CD4-positive, alpha-beta memory T cell (primary cell): ENCODE measurements at regions of chrX and their contacts with region 1.

Region 1: DNA sequence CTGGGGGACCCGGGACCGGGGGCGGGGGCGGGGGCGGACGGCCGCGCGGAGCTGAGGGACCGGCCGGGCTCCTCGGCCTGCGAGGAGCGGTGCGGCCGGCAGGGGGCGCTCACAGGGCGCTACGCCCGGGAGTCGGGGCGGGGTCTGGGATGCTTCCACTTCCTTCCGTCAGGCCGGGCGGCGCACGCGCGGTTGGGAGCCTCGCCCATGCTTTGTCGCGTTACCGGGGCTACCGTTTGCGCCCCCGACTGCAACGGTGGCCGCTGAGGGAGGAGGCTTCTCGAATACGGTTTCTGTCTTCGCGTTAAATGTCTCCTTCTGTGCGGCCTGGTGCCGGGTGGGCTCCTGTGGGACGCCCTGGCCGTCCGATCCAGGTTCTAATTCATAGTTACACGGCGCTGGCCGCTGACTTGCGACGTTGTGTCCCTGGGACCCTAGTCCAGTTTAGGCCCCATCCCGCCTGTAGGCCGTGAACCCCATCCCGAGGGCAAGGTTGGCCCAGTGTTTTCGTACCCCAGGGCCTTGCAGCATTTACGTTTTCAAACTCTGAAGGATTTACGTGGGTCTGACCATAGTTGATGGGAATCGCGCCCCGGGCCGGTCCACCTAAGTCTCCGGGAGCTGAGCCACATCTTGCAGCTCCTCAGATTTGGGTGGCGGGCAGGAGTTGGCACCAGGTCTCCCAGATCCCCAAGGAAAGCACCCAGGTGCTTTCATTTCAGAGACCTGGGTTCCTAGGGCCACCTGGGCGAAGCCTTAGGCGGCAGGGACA is 549 bp downstream of the MSL3 start:
- DNase-seq: peak; percentile 87 to 90 (median 89)
- H3K4me3 ChIP-seq: peak overlapping the region; percentile 56 to 58
- H3K4me3 Mint-ChIP-seq: peak overlapping the region; percentile 88 to 98 (median 94)
- H3K27ac ChIP-seq: peak overlapping the region; percentile 76
- H3K27ac Mint-ChIP-seq: peak overlapping the region; percentile 91 to 99 (median 95)
- H3K4me1 ChIP-seq: peaks cover 29% of the 10 kb centered on the region
- H3K4me1 Mint-ChIP-seq: peaks cover 14 to 46% (median 29%) of the 10 kb centered on the region in 4 donors
- H3K27me3 ChIP-seq: no peaks in the 10 kb centered on the region
- H3K27me3 Mint-ChIP-seq: no peaks in the 10 kb centered on the region

Region 2: GRCh38 chrX:10014462-10015356 is 1743.9 kb before region 1 on chrX:
- CTCF ChIA-PET with region 1: no interaction called
- POLR2A ChIA-PET with region 1: no interaction called
- intact Hi-C with region 1: loop called (anchors 10 kb)
- DNase-seq: peak; percentile 72 to 84 (median 80)
- H3K4me3 ChIP-seq: peak overlapping the region in 1 of 2 donors; percentile 19
- H3K4me3 Mint-ChIP-seq: peak overlapping the region; percentile 43 to 85 (median 66)
- H3K27ac ChIP-seq: peak overlapping the region; percentile 37
- H3K27ac Mint-ChIP-seq: peak overlapping the region in 4 of 7 donors; percentile 35 to 85 (median 60)
- H3K4me1 ChIP-seq: peaks cover 36% of the 10 kb centered on the region
- H3K4me1 Mint-ChIP-seq: peaks cover 18 to 48% (median 33%) of the 10 kb centered on the region in 4 donors
- H3K27me3 ChIP-seq: no peaks in the 10 kb centered on the region
- H3K27me3 Mint-ChIP-seq: no peaks in the 10 kb centered on the region

Region 3: DNA sequence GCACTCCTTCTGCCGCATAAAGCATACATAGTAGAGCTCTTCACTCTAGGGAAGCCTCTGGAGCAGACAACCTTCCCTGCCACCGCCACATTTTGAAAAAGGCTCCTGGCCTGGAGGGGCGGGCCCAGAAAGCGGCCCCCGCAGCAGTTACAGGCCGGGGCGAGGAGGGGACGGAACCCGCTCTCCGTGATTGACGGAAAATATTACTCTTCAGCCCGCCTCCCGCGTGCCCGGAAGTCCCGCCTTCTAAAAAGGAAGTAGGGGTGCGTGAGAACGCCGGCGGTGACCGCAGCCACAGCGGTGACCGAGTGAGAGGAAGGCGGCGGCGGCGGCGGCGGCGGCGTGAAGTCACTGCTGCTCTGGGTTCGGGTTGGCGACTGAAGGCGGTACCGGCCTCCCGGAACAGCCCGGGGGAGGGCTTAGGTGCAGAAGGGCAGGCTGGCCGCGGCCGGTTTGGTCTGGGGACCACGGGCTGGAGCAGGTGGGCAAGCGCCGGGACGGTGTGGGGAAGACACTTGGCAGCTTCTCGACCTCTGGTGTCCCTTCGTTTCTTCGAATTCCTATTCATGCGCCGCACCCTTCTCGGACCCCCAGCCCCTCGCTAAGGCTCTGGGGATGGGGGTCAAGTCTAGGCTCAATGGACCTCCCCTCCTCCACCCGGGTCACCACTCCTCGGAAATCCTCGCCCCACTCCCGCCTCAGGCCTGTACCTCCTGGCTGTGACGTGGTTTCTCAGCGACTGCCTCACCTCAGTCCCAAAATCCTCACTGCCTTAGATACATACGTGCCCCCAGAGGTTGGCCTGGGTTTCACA is 647.3 kb before region 1 on chrX and contains the start of gene HCCS:
- CTCF ChIA-PET with region 1: no interaction called
- POLR2A ChIA-PET with region 1: no interaction called
- intact Hi-C with region 1: loop called (anchors 2 kb)
- DNase-seq: peak; percentile 81 to 88 (median 85)
- H3K4me3 ChIP-seq: peak within 1 kb of the TSS; percentile 52 to 86
- H3K4me3 Mint-ChIP-seq: peak within 1 kb of the TSS in 3 of 8 donors; percentile 92 to 95 (median 94)
- H3K27ac ChIP-seq: peak within 1 kb of the TSS; percentile 93
- H3K27ac Mint-ChIP-seq: peak within 1 kb of the TSS; percentile 96 to 98 (median 97)
- H3K4me1 ChIP-seq: peaks cover 20% of the 10 kb centered on the region
- H3K4me1 Mint-ChIP-seq: peaks cover 7 to 31% (median 22%) of the 10 kb centered on the region in 4 donors
- H3K27me3 ChIP-seq: no peaks in the 10 kb centered on the region
- H3K27me3 Mint-ChIP-seq: peaks cover 0 to 1% of the 10 kb centered on the region in 2 donors
- total RNA-seq, gene HCCS: 12.8 to 15.2 TPM

Region 4: GRCh38 chrX:11589641-11590040 is 168.9 kb before region 1 on chrX:
- CTCF ChIA-PET with region 1: no interaction called
- POLR2A ChIA-PET with region 1: no interaction called
- intact Hi-C with region 1: no loop called
- DNase-seq: no peak
- H3K4me3 ChIP-seq: no peak overlapping the region
- H3K4me3 Mint-ChIP-seq: no peak overlapping the region
- H3K27ac ChIP-seq: no peak overlapping the region
- H3K27ac Mint-ChIP-seq: no peak overlapping the region
- H3K4me1 ChIP-seq: no peaks in the 10 kb centered on the region
- H3K4me1 Mint-ChIP-seq: peaks cover 1 to 8% (median 4%) of the 10 kb centered on the region in 4 donors
- H3K27me3 ChIP-seq: no peaks in the 10 kb centered on the region
- H3K27me3 Mint-ChIP-seq: peaks cover 3 to 5% of the 10 kb centered on the region in 2 donors

Region 5: GRCh38 chrX:11770320-11770719 is 11.7 kb after region 1 on chrX:
- CTCF ChIA-PET with region 1: interaction called, 31 read pairs
- POLR2A ChIA-PET with region 1: interaction called, 40 read pairs
- intact Hi-C with region 1: loop called (anchors 1 kb)
- DNase-seq: peak; percentile 65 to 70 (median 69)
- H3K4me3 ChIP-seq: no peak overlapping the region
- H3K4me3 Mint-ChIP-seq: no peak overlapping the region
- H3K27ac ChIP-seq: no peak overlapping the region
- H3K27ac Mint-ChIP-seq: peak overlapping the region; percentile 54 to 91 (median 82)
- H3K4me1 ChIP-seq: peaks cover 37% of the 10 kb centered on the region
- H3K4me1 Mint-ChIP-seq: peaks cover 17 to 36% (median 28%) of the 10 kb centered on the region in 4 donors
- H3K27me3 ChIP-seq: no peaks in the 10 kb centered on the region
- H3K27me3 Mint-ChIP-seq: no peaks in the 10 kb centered on the region

Region 6: DNA sequence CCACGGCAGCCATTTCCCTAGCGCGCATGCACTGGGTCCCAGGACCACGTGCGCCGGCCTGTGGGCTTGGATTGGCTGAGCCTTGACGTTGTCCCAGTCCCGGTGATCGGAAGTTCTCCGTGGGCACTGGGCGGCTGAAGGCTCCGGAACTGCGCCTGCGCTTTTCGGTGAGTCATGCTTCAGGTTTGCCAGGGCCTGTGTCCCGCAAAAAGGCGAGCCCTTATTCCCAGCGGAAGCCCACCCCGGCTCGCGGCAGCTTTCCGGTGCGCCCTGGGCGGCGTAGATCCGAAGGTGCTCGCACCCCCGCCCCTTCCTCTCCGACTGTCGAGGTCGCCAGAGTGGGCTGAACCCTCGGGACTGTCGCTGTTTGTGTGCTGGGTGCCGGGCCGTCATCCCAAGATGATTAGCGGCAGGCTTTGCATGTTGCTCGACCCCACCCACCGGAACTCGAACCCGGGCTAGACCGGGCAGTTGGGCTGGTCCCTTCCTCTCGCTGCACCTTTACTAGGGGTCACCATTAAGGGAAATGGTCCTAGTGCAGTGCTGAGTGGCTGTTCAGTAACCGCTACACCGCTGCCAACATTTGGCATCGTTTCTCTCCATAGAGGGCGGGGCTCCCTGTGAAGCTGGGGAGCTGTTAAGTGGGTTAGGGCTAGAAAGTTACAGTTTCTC is 1894.6 kb after region 1 on chrX and contains the start of gene TCEANC:
- CTCF ChIA-PET with region 1: no interaction called
- POLR2A ChIA-PET with region 1: no interaction called
- intact Hi-C with region 1: loop called (anchors 2 kb)
- DNase-seq: peak; percentile 95 to 97 (median 96)
- H3K4me3 ChIP-seq: peak within 1 kb of the TSS; percentile 47 to 75
- H3K4me3 Mint-ChIP-seq: peak within 1 kb of the TSS; percentile 91 to 97 (median 96)
- H3K27ac ChIP-seq: peak within 1 kb of the TSS; percentile 94
- H3K27ac Mint-ChIP-seq: peak within 1 kb of the TSS; percentile 96 to 99 (median 99)
- H3K4me1 ChIP-seq: peaks cover 22% of the 10 kb centered on the region
- H3K4me1 Mint-ChIP-seq: peaks cover 11 to 33% (median 18%) of the 10 kb centered on the region in 4 donors
- H3K27me3 ChIP-seq: no peaks in the 10 kb centered on the region
- H3K27me3 Mint-ChIP-seq: no peaks in the 10 kb centered on the region
- total RNA-seq, gene TCEANC: 14.6 to 16.3 TPM